ENCODE measurements at regions of chr14 and their contacts with region 1.

Region 1: GRCh38 chr14:56474419-56475022 is 105.1 kb upstream of the TMEM260 start:
- DNase-seq: no peak
- ATAC-seq: peak; percentile 56 to 80 (median 74)
- H3K4me3 ChIP-seq: no peak overlapping the region
- H3K27ac ChIP-seq: no peak overlapping the region
- H3K4me1 ChIP-seq: no peaks in the 10 kb centered on the region
- H3K27me3 ChIP-seq: no peaks in the 10 kb centered on the region
- CTCF ChIP-seq: peak; percentile 23 to 74 (median 49)

Region 2: GRCh38 chr14:55430024-55430690 is 1044.4 kb before region 1 on chr14:
- intact Hi-C with region 1: loop called in 1 of 3 experiments (anchors 10 kb)
- DNase-seq: peak in 3 of 6 donors; percentile 24 to 44 (median 36)
- ATAC-seq: peak; percentile 66 to 96 (median 92)
- H3K4me3 ChIP-seq: no peak overlapping the region
- H3K27ac ChIP-seq: no peak overlapping the region
- H3K4me1 ChIP-seq: no peaks in the 10 kb centered on the region
- H3K27me3 ChIP-seq: no peaks in the 10 kb centered on the region
- CTCF ChIP-seq: peak in 3 of 4 donors; percentile 8 to 26 (median 9)

Region 3: GRCh38 chr14:55707365-55707804 is 767.1 kb before region 1 on chr14:
- intact Hi-C with region 1: loop called in 1 of 3 experiments (anchors 10 kb)
- DNase-seq: no peak
- ATAC-seq: peak; percentile 47 to 71 (median 68)
- H3K4me3 ChIP-seq: no peak overlapping the region
- H3K27ac ChIP-seq: no peak overlapping the region
- H3K4me1 ChIP-seq: peaks cover 0 to 6% (median 0%) of the 10 kb centered on the region in 3 donors
- H3K27me3 ChIP-seq: no peaks in the 10 kb centered on the region
- CTCF ChIP-seq: peak in 3 of 4 donors; percentile 35 to 43 (median 37)

Region 4: DNA sequence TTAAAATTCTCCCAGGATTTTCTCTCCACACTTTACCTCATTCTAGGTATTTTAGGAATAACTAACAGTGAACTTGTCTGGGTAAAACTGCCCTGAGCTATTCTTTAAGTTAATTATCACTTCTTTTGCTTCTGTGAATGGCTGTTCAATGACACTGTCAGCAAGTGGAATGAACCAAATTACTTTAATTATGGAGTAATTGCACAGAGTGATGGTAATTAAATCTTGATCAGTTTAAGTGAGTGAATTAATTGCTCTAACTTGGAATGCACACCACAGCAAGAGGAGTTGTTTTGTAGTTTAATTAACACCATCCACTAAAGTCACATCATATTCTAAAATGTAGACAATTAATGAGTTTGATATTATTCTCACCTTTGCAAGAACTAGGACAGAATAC is 68.9 kb after region 1 on chr14:
- intact Hi-C with region 1: no loop called
- DNase-seq: no peak
- ATAC-seq: no peak
- H3K4me3 ChIP-seq: no peak overlapping the region
- H3K27ac ChIP-seq: no peak overlapping the region
- H3K4me1 ChIP-seq: no peaks in the 10 kb centered on the region
- H3K27me3 ChIP-seq: no peaks in the 10 kb centered on the region
- CTCF ChIP-seq: no peak

Region 5: DNA sequence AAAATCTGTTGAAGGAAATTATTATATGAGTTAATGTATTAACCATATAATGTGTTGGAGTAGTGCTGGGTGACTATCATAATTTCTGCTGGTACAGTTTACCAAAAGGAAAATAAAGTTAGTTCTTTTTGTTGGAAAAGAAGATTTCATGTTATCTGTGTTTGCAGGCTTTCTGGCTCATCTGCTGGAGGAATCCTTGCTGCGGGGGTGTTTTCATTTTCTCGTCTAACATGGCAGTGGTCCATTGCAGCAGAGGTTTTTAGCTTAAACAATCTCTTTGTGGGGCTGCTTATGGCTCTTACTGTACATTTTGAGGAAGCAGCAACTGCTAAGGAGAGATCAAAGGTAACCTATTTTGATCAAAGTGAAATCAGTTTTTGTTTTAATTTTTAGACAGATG is 129.1 kb after region 1 on chr14:
- intact Hi-C with region 1: no loop called
- DNase-seq: no peak
- ATAC-seq: no peak
- H3K4me3 ChIP-seq: no peak overlapping the region
- H3K27ac ChIP-seq: no peak overlapping the region
- H3K4me1 ChIP-seq: no peaks in the 10 kb centered on the region
- H3K27me3 ChIP-seq: no peaks in the 10 kb centered on the region
- CTCF ChIP-seq: no peak